ENCODE measurements at regions of chr6 and their contacts with region 1.

Region 1: DNA sequence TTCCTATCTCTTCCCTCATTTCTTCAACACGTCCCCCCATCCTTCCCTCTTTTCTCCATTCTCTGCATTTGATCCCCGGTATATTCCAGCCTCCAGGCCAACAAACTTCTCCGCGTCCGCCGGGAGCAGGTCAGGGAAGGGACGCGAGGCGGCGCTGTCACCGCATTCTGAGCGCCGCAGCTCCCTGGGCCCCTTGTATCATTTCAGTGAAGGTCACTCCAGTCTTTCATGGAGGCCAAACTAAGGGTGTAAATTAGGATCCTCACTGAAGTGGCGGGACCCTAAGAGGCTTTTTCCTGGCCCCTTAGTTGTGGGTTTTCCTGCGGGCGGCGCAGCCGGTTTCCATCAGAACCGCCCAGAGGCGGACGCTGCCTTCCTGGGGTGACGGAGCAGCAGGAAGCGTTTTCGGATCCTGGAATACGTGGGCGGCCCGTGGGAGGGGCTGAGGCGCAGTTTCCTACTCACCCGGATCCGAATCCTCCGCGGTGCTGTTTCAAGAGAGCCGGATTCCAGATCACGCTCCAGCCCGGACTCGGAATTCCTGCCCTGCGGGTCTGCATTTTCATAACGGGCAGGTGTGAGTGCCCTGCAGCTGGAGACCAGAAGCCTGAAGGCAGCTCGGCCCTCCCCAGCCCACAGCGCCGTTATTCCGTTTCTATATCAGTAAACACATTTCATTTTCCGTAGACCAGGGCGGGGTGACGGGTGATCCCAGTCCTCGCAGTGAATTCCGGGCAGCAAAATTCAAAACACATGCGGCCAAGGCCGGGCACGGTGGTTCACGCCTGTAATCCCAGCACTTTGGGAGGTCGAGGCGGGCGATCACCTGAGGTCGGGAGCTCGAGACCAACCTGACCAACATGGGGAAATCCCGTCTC is 3.6 kb upstream of the MICA start:
- H3K4me3 Mint-ChIP-seq: peak overlapping the region; percentile 84
- H3K27ac Mint-ChIP-seq: peak overlapping the region; percentile 84
- H3K4me1 Mint-ChIP-seq: peaks cover 63% of the 10 kb centered on the region
- H3K27me3 Mint-ChIP-seq: no peaks in the 10 kb centered on the region

Region 2: GRCh38 chr6:31441365-31442267 is 41.8 kb after region 1 on chr6:
- intact Hi-C with region 1: loop called (anchors 1 kb)
- H3K4me3 Mint-ChIP-seq: no peak overlapping the region
- H3K27ac Mint-ChIP-seq: no peak overlapping the region
- H3K4me1 Mint-ChIP-seq: peaks cover 6% of the 10 kb centered on the region
- H3K27me3 Mint-ChIP-seq: peaks cover 65% of the 10 kb centered on the region

Region 3: GRCh38 chr6:31493875-31494694 is 94.3 kb after region 1 on chr6:
- intact Hi-C with region 1: loop called (anchors 5 kb)
- H3K4me3 Mint-ChIP-seq: peak overlapping the region; percentile 90
- H3K27ac Mint-ChIP-seq: peak overlapping the region; percentile 95
- H3K4me1 Mint-ChIP-seq: peaks cover 46% of the 10 kb centered on the region
- H3K27me3 Mint-ChIP-seq: no peaks in the 10 kb centered on the region

Measured in dendritic cell treated with granulocyte-macrophage colony-stimulating factor and Interleukin-4, amounts not matched to agents 40 ng/mL and 50 ng/mL, for 4 days (primary cell).